Body of pancreas (tissue), 4 donors: ENCODE measurements at regions of chr13 and their contacts with region 1.

Region 1: GRCh38 chr13:49985129-49985528 is 11.7 kb upstream of the TRIM13 start:
- DNase-seq: peak in 2 of 4 donors; percentile 40 to 58
- ATAC-seq: peak; percentile 48
- H3K4me3 ChIP-seq: no peak overlapping the region
- H3K27ac ChIP-seq: no peak overlapping the region
- H3K4me1 ChIP-seq: peaks cover 11% of the 10 kb centered on the region
- H3K27me3 ChIP-seq: no peaks in the 10 kb centered on the region
- CTCF ChIP-seq: no peak
- POLR2A ChIP-seq: no peak

Region 2: DNA sequence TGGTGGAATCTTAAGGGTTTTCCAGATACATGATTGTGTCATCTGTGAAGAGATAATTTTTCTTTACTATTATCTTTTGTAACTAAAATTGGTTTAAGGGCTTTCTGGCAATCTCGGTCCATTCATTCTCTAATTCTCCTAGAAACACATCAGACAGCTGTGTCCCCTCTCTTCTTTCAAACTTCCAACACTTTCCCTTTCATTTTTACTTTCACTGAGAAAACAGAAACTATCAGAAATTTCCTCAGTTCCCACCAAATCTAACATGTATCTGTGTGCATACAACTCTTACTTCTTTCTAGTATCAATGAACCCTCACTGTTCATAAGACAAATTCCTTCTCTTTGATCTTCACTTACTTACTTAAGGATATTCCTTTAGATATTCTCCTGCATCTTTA is 70.3 kb after region 1 on chr13:
- intact Hi-C with region 1: no loop called
- DNase-seq: no peak
- ATAC-seq: no peak
- H3K4me3 ChIP-seq: no peak overlapping the region
- H3K27ac ChIP-seq: no peak overlapping the region
- H3K4me1 ChIP-seq: no peaks in the 10 kb centered on the region
- H3K27me3 ChIP-seq: no peaks in the 10 kb centered on the region
- CTCF ChIP-seq: no peak
- POLR2A ChIP-seq: no peak

Region 3: DNA sequence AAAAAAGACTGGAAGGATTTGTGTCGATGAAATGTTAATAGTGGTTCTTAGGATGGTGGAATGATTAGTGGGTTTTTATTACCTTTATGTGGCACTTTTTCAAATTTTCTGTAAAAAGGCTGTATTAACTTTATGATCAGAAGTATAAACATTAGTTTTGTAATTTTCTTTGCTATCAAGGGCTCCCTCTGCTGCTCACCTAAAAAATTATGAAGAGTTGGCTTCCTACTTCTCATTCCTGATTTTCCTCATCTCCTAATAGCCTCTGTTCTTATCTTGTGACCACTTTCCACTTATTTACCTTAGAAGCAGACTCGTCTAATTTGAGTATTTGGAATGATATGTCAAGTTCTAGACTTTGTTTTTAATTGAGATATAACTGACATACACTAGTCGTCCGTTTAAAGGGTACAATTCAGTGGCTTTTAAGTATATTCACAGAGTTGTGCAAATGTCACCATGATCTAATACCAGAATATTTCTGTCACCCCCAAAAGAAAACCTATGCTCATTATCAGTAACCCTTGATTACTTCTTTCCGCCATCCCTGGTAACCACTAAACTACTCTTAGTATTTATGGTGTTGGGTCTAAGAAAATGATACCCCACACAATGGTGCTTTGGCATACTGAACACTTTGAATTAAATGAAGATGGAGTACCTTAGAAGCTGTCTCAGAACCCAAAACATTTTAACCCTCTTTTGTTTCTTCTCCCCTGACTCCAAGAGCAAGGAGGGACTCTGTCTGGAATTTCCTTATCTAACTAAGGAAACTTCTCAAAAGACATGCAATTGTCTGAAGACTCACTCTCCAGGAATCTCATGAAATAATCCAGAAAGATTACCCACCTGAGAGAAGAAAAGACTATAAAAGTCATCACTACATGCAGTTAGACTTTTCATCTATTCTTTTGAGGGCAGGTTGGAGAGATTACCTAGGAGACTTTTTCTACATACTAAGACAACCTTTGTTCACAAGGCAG is 547.1 kb after region 1 on chr13:
- intact Hi-C with region 1: loop called (anchors 10 kb)
- DNase-seq: no peak
- ATAC-seq: no peak
- H3K4me3 ChIP-seq: no peak overlapping the region
- H3K27ac ChIP-seq: no peak overlapping the region
- H3K4me1 ChIP-seq: peaks cover 28% of the 10 kb centered on the region
- H3K27me3 ChIP-seq: no peaks in the 10 kb centered on the region
- CTCF ChIP-seq: peak; percentile 29 to 70 (median 63)
- POLR2A ChIP-seq: no peak